Left ventricle myocardium inferior (tissue), 1 donor: ENCODE measurements at regions of chr20 and their contacts with region 1.

Region 1: DNA sequence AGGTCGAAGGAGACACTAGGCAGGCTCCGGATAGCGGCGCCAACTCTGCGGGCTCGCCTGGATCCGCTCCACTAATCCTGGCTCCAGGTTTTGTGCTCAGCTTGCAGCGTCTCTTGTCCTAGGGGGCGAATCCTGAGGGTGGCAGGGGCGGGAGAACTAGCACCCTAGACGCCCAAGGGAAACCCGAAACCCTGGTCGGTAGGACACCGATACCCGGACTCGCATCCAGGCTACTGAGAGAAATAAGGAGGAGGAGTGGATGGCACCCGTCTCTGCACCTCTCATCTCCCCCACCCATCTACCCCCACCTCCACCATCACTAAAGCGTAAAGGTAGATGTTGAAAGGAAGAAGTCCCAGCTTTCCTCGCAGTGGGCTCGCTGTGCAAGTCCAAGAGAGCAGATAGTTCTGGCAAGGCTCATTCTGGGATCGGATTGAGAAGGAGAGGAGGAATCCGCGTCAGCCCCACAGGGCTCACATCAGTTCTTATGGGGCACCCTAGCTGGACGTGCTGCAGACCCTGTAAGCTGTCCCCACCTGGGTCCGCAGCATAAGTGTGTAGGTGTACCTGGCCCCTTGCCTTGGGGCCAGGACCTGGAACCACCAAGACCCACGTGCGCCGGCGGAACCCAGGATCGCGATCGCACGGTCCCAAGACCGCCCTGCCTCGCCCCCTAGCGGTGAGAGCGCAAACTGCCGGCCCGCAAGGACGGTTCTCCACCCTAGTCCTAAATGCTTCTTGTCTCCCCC is 6.9 kb downstream of the SLC32A1 start:
- DNase-seq: peak; percentile 59
- H3K4me3 ChIP-seq: peak overlapping the region; percentile 53
- H3K27ac ChIP-seq: no peak overlapping the region
- H3K4me1 ChIP-seq: peaks cover 35% of the 10 kb centered on the region
- H3K27me3 ChIP-seq: peaks cover 100% of the 10 kb centered on the region
- CTCF ChIP-seq: peak; percentile 95

Region 2: GRCh38 chr20:38645980-38646858 is 84.9 kb before region 1 on chr20:
- intact Hi-C with region 1: loop called (anchors 5 kb)
- DNase-seq: peak; percentile 68
- H3K4me3 ChIP-seq: peak overlapping the region; percentile 43
- H3K27ac ChIP-seq: no peak overlapping the region
- H3K4me1 ChIP-seq: peaks cover 9% of the 10 kb centered on the region
- H3K27me3 ChIP-seq: peaks cover 100% of the 10 kb centered on the region
- CTCF ChIP-seq: peak; percentile 96